CD8-positive, alpha-beta memory T cell (primary cell): ENCODE measurements at regions of chr20 and their contacts with region 1.

Region 1: DNA sequence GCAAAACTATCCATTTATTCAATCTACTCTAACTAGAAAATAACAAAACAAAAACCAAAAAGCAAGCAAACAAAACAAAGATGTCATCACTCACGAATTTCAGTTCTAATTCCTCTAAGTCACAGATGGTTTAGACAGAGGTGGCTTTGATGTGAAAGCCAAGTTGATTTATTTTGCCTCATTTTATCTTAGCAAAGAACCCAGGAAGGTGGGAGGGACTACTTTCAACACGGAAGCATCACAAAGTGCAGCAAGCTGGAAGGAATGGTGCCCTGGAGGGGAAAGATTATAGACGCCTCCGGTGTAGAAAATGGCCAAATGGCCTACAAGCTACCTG is 88.4 kb downstream of the LAMP5 start:
- DNase-seq: no peak
- H3K4me3 ChIP-seq: no peak overlapping the region
- H3K4me3 Mint-ChIP-seq: no peak overlapping the region
- H3K27ac ChIP-seq: no peak overlapping the region
- H3K27ac Mint-ChIP-seq: no peak overlapping the region
- H3K4me1 ChIP-seq: no peaks in the 10 kb centered on the region
- H3K4me1 Mint-ChIP-seq: no peaks in the 10 kb centered on the region
- H3K27me3 ChIP-seq: no peaks in the 10 kb centered on the region
- H3K27me3 Mint-ChIP-seq: peaks cover 2 to 3% of the 10 kb centered on the region in 2 donors

Region 2: DNA sequence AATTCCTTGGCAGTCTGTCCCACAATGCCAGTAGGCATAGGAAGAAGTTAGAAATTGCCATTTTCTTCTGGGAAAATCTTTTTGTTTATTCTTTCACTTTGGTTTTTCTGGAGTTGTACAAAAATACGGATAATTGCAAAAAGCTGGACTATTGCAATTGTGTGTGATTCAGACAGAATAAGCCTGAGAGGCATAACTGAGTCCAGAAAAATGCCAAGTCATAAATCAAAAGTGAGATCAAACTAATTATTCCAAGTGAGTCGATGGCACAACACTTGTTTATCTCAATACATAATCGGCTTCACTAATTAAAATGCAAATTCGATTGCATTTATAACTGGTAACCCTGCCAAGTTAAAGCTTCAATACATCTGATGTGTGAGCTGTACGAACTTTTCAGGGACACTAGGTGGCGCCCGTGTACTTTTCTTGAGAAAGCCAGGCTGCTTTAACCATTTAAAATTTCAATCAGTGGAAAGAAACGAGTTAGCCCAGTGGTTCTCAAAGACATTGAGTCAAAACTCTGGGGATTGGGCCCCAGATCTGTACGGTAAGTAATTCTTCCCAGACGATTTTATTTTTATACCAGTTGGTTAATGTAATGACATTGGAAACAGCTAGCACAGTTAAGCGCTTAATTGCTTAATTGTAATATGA is 14.1 kb after region 1 on chr20:
- CTCF ChIA-PET with region 1: interaction called, 14 read pairs
- POLR2A ChIA-PET with region 1: no interaction called
- DNase-seq: peak; percentile 4 to 49 (median 15)
- H3K4me3 ChIP-seq: no peak overlapping the region
- H3K4me3 Mint-ChIP-seq: no peak overlapping the region
- H3K27ac ChIP-seq: no peak overlapping the region
- H3K27ac Mint-ChIP-seq: no peak overlapping the region
- H3K4me1 ChIP-seq: no peaks in the 10 kb centered on the region
- H3K4me1 Mint-ChIP-seq: no peaks in the 10 kb centered on the region
- H3K27me3 ChIP-seq: no peaks in the 10 kb centered on the region
- H3K27me3 Mint-ChIP-seq: peaks cover 0 to 1% of the 10 kb centered on the region in 2 donors